WTC11 (cell line): ENCODE measurements at regions of chr11 and their contacts with region 1.

Region 1: DNA sequence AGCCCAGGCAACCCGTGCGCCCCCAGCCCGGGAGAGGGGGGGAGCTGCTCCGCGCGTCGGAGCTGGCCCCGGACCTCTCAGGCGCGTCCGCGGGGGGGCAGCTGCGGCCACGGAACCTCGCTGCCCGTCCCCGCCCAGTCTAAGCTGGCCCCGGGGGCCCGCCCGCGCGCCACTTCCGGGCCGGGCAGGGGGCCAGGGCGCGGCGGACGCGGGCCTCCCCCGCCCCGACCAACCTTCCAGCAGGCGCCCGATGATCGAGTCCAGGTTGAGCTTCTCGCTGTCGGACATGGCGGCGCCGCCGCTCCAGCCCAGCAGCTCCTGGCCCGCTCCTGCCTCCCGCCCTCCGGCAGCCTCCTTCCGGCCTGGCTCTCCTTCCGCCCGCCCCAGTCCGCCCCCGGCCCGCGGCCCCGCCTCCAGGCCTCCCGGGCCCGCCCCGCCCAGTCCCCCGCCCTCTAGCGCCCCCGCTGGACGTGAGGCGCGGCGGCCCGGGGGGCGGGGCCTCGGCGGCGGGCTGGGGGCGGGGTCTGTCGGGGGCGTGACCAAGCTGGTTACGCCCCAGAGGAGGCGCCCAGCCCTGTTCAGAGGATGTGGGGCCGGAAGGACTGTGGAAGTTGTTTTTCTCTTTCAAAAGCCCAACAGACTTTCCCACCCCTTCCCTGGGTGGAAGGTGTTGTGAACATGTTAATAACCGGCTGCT is at the start of gene PPP1CA:
- DNase-seq: peak; percentile 88
- ATAC-seq: peak; percentile 86
- H3K4me3 Mint-ChIP-seq: peak within 1 kb of the TSS; percentile 73
- H3K27ac Mint-ChIP-seq: peak within 1 kb of the TSS; percentile 78
- H3K4me1 Mint-ChIP-seq: peaks cover 34% of the 10 kb centered on the region
- H3K27me3 Mint-ChIP-seq: no peaks in the 10 kb centered on the region
- CTCF ChIP-seq: peak; percentile 46
- total RNA-seq, gene PPP1CA: 220 to 222 TPM (median 221 TPM) in 3 replicates

Region 2: DNA sequence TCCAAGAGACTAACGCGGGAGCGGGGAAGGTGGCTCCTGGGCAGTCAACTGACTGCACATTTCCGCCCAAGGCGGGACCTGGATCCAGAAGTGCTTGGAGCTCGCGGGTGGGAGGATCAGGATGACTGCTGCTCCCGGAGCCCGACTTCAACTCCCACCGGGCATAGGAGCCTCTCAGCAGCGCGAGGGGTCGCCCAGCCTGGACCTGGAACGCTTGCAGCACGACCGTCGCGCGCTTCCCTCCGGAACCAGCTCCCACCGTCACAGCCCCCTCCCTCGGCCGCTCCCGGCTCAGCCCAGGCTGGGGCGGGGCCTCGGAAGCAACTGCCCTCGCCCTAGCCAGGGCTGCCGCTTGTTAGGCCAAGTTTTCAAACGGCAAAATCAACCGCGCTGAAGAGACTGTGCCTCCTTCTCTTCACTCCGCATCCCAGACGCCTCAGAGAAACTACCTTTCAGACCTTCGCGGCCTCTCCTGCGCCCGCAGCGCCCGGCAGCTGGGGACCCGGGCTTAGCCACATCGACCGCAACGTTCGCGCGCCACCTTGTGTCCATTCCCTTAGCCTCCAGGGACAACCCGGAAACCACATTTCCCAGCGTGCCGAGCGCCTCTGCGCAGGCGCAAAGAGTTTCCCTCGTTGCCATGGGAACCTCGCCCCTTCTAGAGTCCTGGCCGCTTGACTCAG is 84.3 kb before region 1 on chr11:
- CTCF ChIA-PET with region 1: interaction called, 10 read pairs
- POLR2A ChIA-PET with region 1: no interaction called
- DNase-seq: peak; percentile 99
- ATAC-seq: peak; percentile 83
- H3K4me3 Mint-ChIP-seq: peak overlapping the region; percentile 91
- H3K27ac Mint-ChIP-seq: peak overlapping the region; percentile 96
- H3K4me1 Mint-ChIP-seq: peaks cover 5% of the 10 kb centered on the region
- H3K27me3 Mint-ChIP-seq: peaks cover 41% of the 10 kb centered on the region
- CTCF ChIP-seq: peak; percentile 58

Region 3: GRCh38 chr11:67353317-67354074 is 48.1 kb before region 1 on chr11 and contains the start of gene POLD4:
- CTCF ChIA-PET with region 1: interaction called, 23 read pairs
- POLR2A ChIA-PET with region 1: no interaction called
- DNase-seq: peak; percentile 99
- ATAC-seq: peak; percentile 88
- H3K4me3 Mint-ChIP-seq: peak within 1 kb of the TSS; percentile 91
- H3K27ac Mint-ChIP-seq: peak within 1 kb of the TSS; percentile 90
- H3K4me1 Mint-ChIP-seq: peaks cover 34% of the 10 kb centered on the region
- H3K27me3 Mint-ChIP-seq: peaks cover 10% of the 10 kb centered on the region
- CTCF ChIP-seq: no peak
- total RNA-seq, gene POLD4: 30.3 to 38.3 TPM (median 37.7 TPM) in 3 replicates

Region 4: GRCh38 chr11:67382276-67383136 is 19.1 kb before region 1 on chr11:
- CTCF ChIA-PET with region 1: interaction called, 112 read pairs
- POLR2A ChIA-PET with region 1: interaction called, 6 read pairs
- DNase-seq: peak; percentile 90
- ATAC-seq: peak; percentile 85
- H3K4me3 Mint-ChIP-seq: no peak overlapping the region
- H3K27ac Mint-ChIP-seq: no peak overlapping the region; the same call in 1 of the 2 replicates
- H3K4me1 Mint-ChIP-seq: peaks cover 17% of the 10 kb centered on the region
- H3K27me3 Mint-ChIP-seq: peaks cover 52% of the 10 kb centered on the region
- CTCF ChIP-seq: peak; percentile 90

Region 5: DNA sequence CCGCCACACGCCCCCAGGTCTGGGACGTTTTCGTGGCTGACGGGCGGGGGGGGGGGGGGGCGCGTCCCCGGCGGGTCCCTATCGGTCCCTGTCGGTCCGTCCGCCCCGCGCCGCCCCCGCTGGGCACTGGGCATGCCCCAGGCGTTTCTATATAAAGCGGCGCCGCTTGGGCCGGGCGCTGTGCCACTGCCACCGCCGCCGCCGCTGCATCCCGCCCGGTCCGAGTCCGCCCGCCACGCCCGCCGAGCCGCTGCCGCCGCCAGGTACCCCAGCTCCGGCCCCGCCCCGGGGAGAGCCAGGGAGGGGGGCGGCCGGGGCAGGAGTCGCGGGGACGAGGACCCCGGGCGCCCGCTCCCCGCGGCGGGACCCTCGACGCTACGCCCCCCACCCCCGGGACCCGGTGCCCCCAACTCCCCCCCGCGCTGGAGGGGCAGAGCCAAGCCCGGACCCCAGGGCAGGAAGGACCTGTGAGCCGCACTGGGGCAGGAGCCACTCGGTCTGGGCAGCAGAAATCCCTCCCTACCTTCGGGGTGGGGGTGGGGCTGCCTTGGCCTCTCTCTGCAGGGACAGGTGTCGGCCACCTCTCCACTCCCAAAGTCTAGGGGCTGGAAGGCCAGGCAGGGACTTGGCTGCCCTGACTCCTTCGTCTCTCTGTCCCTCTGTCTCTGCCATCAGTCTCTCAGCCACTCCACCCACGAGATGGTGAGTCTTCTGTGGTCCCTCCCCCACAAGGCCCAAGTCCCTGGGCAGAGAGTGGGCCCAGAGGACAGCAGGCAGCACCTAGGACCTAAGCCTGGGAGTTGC is 14.1 kb after region 1 on chr11 and contains the start of gene CARNS1:
- CTCF ChIA-PET with region 1: interaction called, 45 read pairs
- POLR2A ChIA-PET with region 1: interaction called, 11 read pairs
- DNase-seq: peak; percentile 66
- ATAC-seq: peak; percentile 46
- H3K4me3 Mint-ChIP-seq: peak within 1 kb of the TSS; percentile 74
- H3K27ac Mint-ChIP-seq: peak within 1 kb of the TSS; percentile 13
- H3K4me1 Mint-ChIP-seq: peaks cover 14% of the 10 kb centered on the region
- H3K27me3 Mint-ChIP-seq: peaks cover 16% of the 10 kb centered on the region
- CTCF ChIP-seq: no peak
- total RNA-seq, gene CARNS1: 1.3 to 2.6 TPM (median 2.4 TPM) in 3 replicates

Region 6: GRCh38 chr11:67428052-67428914 is 26.6 kb after region 1 on chr11 and contains the start of gene RPS6KB2:
- CTCF ChIA-PET with region 1: interaction called, 23 read pairs
- POLR2A ChIA-PET with region 1: interaction called, 10 read pairs
- DNase-seq: peak; percentile 100
- ATAC-seq: peak; percentile 91
- H3K4me3 Mint-ChIP-seq: peak within 1 kb of the TSS; percentile 97
- H3K27ac Mint-ChIP-seq: peak within 1 kb of the TSS; percentile 93
- H3K4me1 Mint-ChIP-seq: peaks cover 4% of the 10 kb centered on the region
- H3K27me3 Mint-ChIP-seq: no peaks in the 10 kb centered on the region
- CTCF ChIP-seq: no peak
- total RNA-seq, gene RPS6KB2: 44.3 to 54.7 TPM (median 50.2 TPM) in 3 replicates

Region 7: DNA sequence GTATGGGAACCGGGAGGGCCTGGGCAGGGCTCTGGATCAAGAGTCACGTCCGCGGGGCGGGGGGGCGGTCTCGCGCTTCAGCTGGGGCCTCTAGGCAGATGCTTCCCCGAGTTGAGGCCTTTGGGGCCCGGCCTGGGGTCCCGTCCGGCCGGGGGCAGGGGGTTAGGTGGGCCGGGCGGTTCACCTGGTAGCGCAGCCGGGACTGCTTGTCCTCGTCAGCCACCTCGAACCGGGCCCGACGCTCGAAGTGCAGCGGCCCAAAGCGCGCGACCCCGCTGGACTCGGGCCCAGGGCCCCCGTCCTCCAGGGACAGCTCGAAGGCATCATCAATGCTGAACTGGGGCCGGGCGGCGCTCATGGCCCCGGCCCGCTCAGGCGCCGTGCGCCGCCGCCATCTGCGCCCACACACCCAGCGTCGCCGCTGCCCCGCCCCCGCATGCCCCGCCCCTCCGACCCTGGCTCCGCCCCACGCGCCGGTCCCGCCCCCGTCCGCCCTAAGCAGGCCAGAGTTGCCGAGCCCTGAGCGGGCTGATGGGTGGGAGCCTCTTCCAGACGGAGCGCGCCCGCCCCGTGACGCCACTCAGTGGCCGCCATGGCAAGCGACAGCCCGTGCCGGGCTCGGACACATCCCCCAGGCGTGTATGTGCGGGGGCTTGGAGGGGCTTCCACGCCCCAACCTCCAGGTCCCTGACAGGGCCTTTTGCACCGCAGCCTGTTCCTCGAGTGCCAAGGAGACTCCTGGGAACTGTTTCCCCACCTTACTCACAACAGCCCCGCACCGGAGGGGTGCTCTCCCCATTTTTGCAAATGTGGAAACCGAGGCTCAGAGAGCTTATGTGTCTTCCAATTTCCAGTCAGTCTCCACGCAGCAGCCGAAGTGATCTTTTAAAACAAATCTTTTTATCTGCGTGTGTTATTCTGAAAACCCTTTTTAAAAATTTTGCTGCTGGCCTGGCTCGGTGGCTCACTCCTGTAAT is 67.5 kb after region 1 on chr11 and contains the start of gene TMEM134:
- CTCF ChIA-PET with region 1: interaction called, 28 read pairs
- POLR2A ChIA-PET with region 1: interaction called, 8 read pairs
- DNase-seq: peak; percentile 92
- ATAC-seq: peak; percentile 77
- H3K4me3 Mint-ChIP-seq: peak within 1 kb of the TSS; percentile 87
- H3K27ac Mint-ChIP-seq: 0 out of 2 replicates have a peak within 1 kb of the TSS, but pooled peaks have one; percentile 42
- H3K4me1 Mint-ChIP-seq: peaks cover 23% of the 10 kb centered on the region
- H3K27me3 Mint-ChIP-seq: peaks cover 13% of the 10 kb centered on the region
- CTCF ChIP-seq: no peak
- total RNA-seq, gene TMEM134: 55.6 to 61.1 TPM (median 59.6 TPM) in 3 replicates

Region 8: GRCh38 chr11:67563354-67564114 is 161.9 kb after region 1 on chr11:
- CTCF ChIA-PET with region 1: no interaction called
- POLR2A ChIA-PET with region 1: no interaction called
- DNase-seq: no peak
- ATAC-seq: no peak
- H3K4me3 Mint-ChIP-seq: no peak overlapping the region
- H3K27ac Mint-ChIP-seq: no peak overlapping the region
- H3K4me1 Mint-ChIP-seq: peaks cover 17% of the 10 kb centered on the region
- H3K27me3 Mint-ChIP-seq: peaks cover 5% of the 10 kb centered on the region
- CTCF ChIP-seq: no peak